ENCODE measurements at regions of chr10 and their contacts with region 1.

Region 1: GRCh38 chr10:23158370-23158769 is 33.7 kb upstream of the PTF1A start:
- DNase-seq: peak in 1 of 2 experiments; percentile 58
- H3K4me3 ChIP-seq: peak overlapping the region in 2 of 4 experiments; percentile 32 to 49; a peak in 4 of 8 replicates
- H3K27ac ChIP-seq: no peak overlapping the region
- H3K4me1 ChIP-seq: peaks cover 0 to 2% (median under 1%) of the 10 kb centered on the region in 4 experiments; a peak in 3 of 7 replicates
- H3K27me3 ChIP-seq: peaks cover 0 to 8% (median 0%) of the 10 kb centered on the region in 4 experiments; a peak in 2 of 7 replicates
- CTCF ChIP-seq: peak; percentile 48 to 87 (median 81)
- EP300 ChIP-seq: no peak
- POLR2A ChIP-seq: no peak
- RAD21 ChIP-seq: peak; percentile 95 to 96

Region 2: GRCh38 chr10:22874189-22874854 is 284.0 kb before region 1 on chr10:
- CTCF ChIA-PET with region 1: no interaction called
- POLR2A ChIA-PET with region 1: no interaction called
- DNase-seq: no peak
- H3K4me3 ChIP-seq: no peak overlapping the region
- H3K27ac ChIP-seq: no peak overlapping the region
- H3K4me1 ChIP-seq: peaks cover 2 to 17% (median 8%) of the 10 kb centered on the region in 4 experiments; a peak in 4 of 7 replicates
- H3K27me3 ChIP-seq: no peaks in the 10 kb centered on the region
- CTCF ChIP-seq: no peak
- EP300 ChIP-seq: no peak
- POLR2A ChIP-seq: no peak
- RAD21 ChIP-seq: no peak

Region 3: DNA sequence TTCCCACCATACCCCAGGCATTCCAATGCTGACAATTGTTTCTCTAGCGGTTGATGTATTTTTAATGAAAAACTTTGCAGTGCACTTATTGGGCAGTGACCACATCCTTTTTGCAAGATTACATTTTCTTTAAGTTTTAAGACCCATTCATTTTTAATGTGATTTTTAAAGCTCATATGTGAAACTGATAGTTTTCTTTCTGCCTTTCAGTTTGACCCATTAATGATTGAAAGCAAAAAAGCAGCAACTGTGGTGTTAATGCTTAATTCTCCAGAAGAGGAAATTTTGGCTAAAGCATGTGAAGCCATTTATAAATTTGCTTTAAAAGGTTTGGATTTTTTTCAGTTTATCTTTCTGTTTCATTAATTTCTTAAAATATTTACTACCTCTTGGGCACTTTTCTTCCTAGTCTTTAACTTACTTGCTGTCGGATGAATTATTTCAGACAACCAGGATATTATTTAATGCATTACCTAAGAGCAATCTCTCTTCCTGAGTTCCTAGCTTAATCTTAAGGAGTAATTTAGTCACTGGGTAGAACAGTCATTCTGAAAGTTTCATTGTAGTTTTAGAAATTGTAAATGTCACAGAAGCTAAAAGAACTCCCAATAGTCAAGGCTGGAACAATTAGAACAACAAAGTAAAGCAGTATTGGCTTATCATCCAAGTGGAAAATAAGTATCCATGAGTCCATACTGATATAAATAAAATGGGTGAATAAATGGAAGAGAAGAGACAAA is 212.3 kb before region 1 on chr10:
- CTCF ChIA-PET with region 1: no interaction called
- POLR2A ChIA-PET with region 1: no interaction called
- DNase-seq: no peak
- H3K4me3 ChIP-seq: no peak overlapping the region
- H3K27ac ChIP-seq: no peak overlapping the region
- H3K4me1 ChIP-seq: no peaks in the 10 kb centered on the region
- H3K27me3 ChIP-seq: no peaks in the 10 kb centered on the region
- CTCF ChIP-seq: no peak
- EP300 ChIP-seq: no peak
- POLR2A ChIP-seq: no peak
- RAD21 ChIP-seq: no peak

Region 4: DNA sequence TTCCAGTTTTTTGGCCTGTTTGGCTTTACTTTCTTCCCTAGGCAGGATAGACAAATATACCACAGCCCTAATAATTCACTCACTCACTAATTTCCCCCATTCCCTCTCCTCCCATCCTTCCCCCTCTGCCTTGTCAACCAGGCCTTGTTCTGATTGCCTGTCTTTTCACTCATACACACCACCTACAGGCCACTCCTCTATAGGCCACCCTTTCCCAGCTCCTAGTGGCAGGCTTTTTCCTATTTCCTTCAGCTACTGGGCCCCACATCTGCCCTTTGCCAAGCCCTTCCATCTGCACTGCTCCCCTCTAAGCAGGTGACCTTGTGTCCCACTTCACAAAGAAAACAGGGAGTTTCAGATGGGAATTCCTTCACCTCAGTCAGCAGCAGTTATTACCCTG is 122.8 kb before region 1 on chr10:
- CTCF ChIA-PET with region 1: no interaction called
- POLR2A ChIA-PET with region 1: no interaction called
- DNase-seq: peak in 1 of 2 experiments; percentile 13
- H3K4me3 ChIP-seq: no peak overlapping the region
- H3K27ac ChIP-seq: no peak overlapping the region
- H3K4me1 ChIP-seq: no peaks in the 10 kb centered on the region
- H3K27me3 ChIP-seq: no peaks in the 10 kb centered on the region
- CTCF ChIP-seq: peak; percentile 45 to 96 (median 75)
- EP300 ChIP-seq: no peak
- POLR2A ChIP-seq: no peak
- RAD21 ChIP-seq: peak; percentile 54 to 67

Region 5: GRCh38 chr10:23081891-23082290 is 76.5 kb before region 1 on chr10:
- CTCF ChIA-PET with region 1: no interaction called
- POLR2A ChIA-PET with region 1: no interaction called
- DNase-seq: no peak
- H3K4me3 ChIP-seq: no peak overlapping the region
- H3K27ac ChIP-seq: no peak overlapping the region
- H3K4me1 ChIP-seq: peaks cover 0 to 7% (median 4%) of the 10 kb centered on the region in 4 experiments; a peak in 6 of 7 replicates
- H3K27me3 ChIP-seq: no peaks in the 10 kb centered on the region
- CTCF ChIP-seq: peak in 2 of 3 experiments; percentile 21 to 46; a peak in 2 of 4 replicates
- EP300 ChIP-seq: no peak
- POLR2A ChIP-seq: no peak
- RAD21 ChIP-seq: peak; percentile 11 to 36; a peak in 3 of 4 replicates

Region 6: DNA sequence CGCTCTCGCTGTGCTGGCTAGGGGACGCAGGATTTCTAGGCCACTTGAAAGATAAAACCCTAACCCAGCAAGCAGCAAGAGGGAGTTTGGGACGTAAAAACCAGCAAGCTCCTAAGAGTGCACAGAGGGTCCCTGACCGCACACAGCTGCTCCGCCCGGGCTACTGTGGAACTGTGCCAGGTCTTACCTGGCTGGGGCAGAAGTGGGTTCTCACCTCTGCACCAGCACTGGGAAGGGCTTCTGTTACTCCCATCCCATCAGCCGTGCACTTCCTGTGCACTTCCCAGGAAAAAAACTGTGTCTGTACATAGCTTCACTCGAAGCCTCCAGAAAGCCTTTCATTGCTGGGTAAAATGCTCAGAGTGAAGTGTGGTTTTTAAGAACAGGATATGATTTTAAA is 12.1 kb before region 1 on chr10:
- CTCF ChIA-PET with region 1: interaction called, 27 read pairs
- POLR2A ChIA-PET with region 1: interaction called, 3 read pairs
- DNase-seq: no peak
- H3K4me3 ChIP-seq: no peak overlapping the region
- H3K27ac ChIP-seq: no peak overlapping the region
- H3K4me1 ChIP-seq: no peaks in the 10 kb centered on the region
- H3K27me3 ChIP-seq: no peaks in the 10 kb centered on the region; a peak in 1 of 7 replicates
- CTCF ChIP-seq: no peak
- EP300 ChIP-seq: no peak
- POLR2A ChIP-seq: no peak
- RAD21 ChIP-seq: no peak

Region 7: GRCh38 chr10:23190872-23191763 is 32.7 kb after region 1 on chr10:
- CTCF ChIA-PET with region 1: interaction called, 17 read pairs
- POLR2A ChIA-PET with region 1: no interaction called
- DNase-seq: peak in 1 of 2 experiments; percentile 62
- H3K4me3 ChIP-seq: peak overlapping the region in 2 of 4 experiments; percentile 10 to 54; a peak in 3 of 8 replicates
- H3K27ac ChIP-seq: no peak overlapping the region
- H3K4me1 ChIP-seq: peaks cover 7 to 15% (median 12%) of the 10 kb centered on the region in 4 experiments
- H3K27me3 ChIP-seq: peaks cover 87 to 99% (median 95%) of the 10 kb centered on the region in 4 experiments
- CTCF ChIP-seq: no peak
- EP300 ChIP-seq: no peak
- POLR2A ChIP-seq: no peak
- RAD21 ChIP-seq: no peak

Region 8: GRCh38 chr10:23270531-23270930 is 112.2 kb after region 1 on chr10:
- CTCF ChIA-PET with region 1: interaction called, 10 read pairs
- POLR2A ChIA-PET with region 1: no interaction called
- DNase-seq: no peak
- H3K4me3 ChIP-seq: no peak overlapping the region
- H3K27ac ChIP-seq: no peak overlapping the region
- H3K4me1 ChIP-seq: no peaks in the 10 kb centered on the region
- H3K27me3 ChIP-seq: no peaks in the 10 kb centered on the region
- CTCF ChIP-seq: no peak
- EP300 ChIP-seq: no peak
- POLR2A ChIP-seq: no peak
- RAD21 ChIP-seq: no peak

Region 9: GRCh38 chr10:23293145-23293724 is 134.9 kb after region 1 on chr10:
- CTCF ChIA-PET with region 1: interaction called, 183 read pairs
- POLR2A ChIA-PET with region 1: no interaction called
- DNase-seq: peak; percentile 36 to 80
- H3K4me3 ChIP-seq: no peak overlapping the region
- H3K27ac ChIP-seq: no peak overlapping the region
- H3K4me1 ChIP-seq: no peaks in the 10 kb centered on the region
- H3K27me3 ChIP-seq: peaks cover 0 to 1% (median 0%) of the 10 kb centered on the region in 4 experiments; a peak in 1 of 7 replicates
- CTCF ChIP-seq: peak; percentile 20 to 92 (median 82)
- EP300 ChIP-seq: no peak
- POLR2A ChIP-seq: no peak
- RAD21 ChIP-seq: peak; percentile 90 to 93

Region 10: DNA sequence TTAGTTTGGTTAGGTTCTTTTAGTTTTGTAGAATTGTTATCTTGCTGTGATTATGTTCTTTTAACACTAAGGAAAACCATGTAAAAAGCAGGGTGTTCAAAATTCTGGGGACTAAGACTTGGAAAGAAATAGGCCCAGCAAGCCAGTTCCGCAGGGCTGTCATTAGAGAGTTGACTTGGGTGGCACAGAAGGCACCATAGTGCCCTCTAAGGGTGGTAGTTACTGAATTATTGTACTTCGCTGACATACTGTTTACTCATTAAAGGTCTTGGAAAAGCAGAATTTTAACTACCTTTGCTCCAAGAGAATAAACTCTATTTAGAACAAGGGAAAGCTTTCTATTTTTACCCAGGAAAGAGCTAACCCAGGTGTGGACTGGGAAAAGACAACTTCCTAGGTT is 367.0 kb after region 1 on chr10:
- CTCF ChIA-PET with region 1: interaction called, 18 read pairs
- POLR2A ChIA-PET with region 1: no interaction called
- DNase-seq: no peak
- H3K4me3 ChIP-seq: no peak overlapping the region
- H3K27ac ChIP-seq: no peak overlapping the region
- H3K4me1 ChIP-seq: no peaks in the 10 kb centered on the region
- H3K27me3 ChIP-seq: no peaks in the 10 kb centered on the region
- CTCF ChIP-seq: peak in 2 of 3 experiments; percentile 34 to 41; a peak in 2 of 4 replicates
- EP300 ChIP-seq: no peak
- POLR2A ChIP-seq: no peak
- RAD21 ChIP-seq: peak; percentile 61 to 69